ENCODE measurements at regions of chr17 and their contacts with region 1.

Region 1: DNA sequence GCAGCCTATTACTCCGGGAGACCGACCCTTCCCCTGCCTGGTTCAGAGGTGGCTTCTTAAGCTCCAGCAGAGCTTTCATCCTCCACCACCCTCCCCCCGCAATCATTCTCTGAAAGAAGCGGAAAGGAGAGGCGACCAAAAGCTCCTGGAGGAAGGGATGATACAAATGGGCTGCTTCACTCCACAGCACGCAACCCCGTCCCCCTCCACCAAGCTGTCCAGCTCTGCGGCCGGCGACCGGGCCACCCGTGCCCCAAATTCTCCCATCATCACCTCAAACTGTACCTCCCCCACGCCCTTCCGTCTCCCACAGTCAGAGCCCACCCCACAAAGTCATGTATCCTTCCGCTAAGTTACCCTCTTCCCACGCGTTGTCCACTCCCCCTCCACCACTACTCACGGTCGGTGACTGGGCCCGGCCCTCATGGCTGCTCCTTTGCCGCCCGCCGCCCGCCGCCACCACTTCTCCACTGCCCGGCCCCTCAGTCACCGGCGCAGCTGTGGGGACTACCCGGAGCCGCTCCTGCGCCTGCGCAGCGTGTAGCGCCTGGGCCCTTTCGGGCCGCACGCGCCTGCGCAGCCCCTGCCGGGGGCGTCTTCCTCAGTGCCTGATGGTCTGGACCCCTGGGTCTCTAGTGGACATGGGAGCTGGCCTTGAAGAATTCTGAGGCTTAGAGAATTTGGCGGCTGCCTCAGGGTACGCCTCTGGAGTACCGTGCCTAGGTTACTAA is at the start of gene FAM222B:
- DNase-seq: peak; percentile 78
- ATAC-seq: peak; percentile 98
- H3K4me3 ChIP-seq: peak within 1 kb of the TSS; percentile 87
- H3K27ac ChIP-seq: 0 out of 2 replicates have a peak within 1 kb of the TSS, but pooled peaks have one; percentile 20
- H3K4me1 ChIP-seq: no peaks in the 10 kb centered on the region
- H3K27me3 ChIP-seq: no peaks in the 10 kb centered on the region
- CTCF ChIP-seq: no peak
- total RNA-seq, gene FAM222B: 4.8 and 6.5 TPM in 2 replicates

Region 2: GRCh38 chr17:28710861-28711722 is 131.4 kb before region 1 on chr17:
- CTCF ChIA-PET with region 1: no interaction called
- POLR2A ChIA-PET with region 1: no interaction called
- intact Hi-C with region 1: no loop called
- DNase-seq: peak; percentile 87
- ATAC-seq: peak; percentile 96
- H3K4me3 ChIP-seq: peak overlapping the region; percentile 74
- H3K27ac ChIP-seq: peak overlapping the region; percentile 70
- H3K4me1 ChIP-seq: peaks cover 4% of the 10 kb centered on the region; the same call in 1 of the 2 replicates
- H3K27me3 ChIP-seq: no peaks in the 10 kb centered on the region
- CTCF ChIP-seq: no peak

Region 3: DNA sequence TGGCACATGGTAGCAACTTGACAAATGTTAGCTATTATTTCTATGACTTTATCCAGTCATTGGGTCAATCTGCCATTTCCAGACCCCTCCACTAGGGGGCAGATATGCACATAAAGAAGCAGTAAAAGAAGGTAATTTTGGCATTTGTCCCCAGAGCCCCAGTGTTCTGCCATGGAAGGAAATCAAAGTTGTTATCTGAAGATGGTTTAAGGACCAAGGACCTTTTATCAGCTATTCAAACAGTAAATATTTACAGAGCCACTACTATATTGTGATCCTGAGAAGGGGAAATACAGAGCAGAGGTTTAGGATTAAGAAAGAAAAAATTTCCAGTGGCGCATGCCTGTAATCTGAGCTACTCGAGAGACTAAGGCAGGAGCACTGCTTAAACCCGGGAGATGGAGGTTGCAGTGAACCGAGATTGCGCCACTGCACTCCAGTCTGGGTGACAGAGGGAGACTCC is 78.6 kb before region 1 on chr17:
- CTCF ChIA-PET with region 1: interaction called, 15 read pairs
- POLR2A ChIA-PET with region 1: no interaction called
- intact Hi-C with region 1: no loop called
- DNase-seq: peak; percentile 85
- ATAC-seq: no peak; the same call in 1 of the 2 replicates
- H3K4me3 ChIP-seq: no peak overlapping the region
- H3K27ac ChIP-seq: no peak overlapping the region
- H3K4me1 ChIP-seq: peaks cover 14% of the 10 kb centered on the region
- H3K27me3 ChIP-seq: no peaks in the 10 kb centered on the region
- CTCF ChIP-seq: peak; percentile 86

Region 4: GRCh38 chr17:28812748-28813377 is 29.6 kb before region 1 on chr17:
- CTCF ChIA-PET with region 1: no interaction called
- POLR2A ChIA-PET with region 1: no interaction called
- intact Hi-C with region 1: loop called (anchors 5 kb)
- DNase-seq: no peak
- ATAC-seq: peak; percentile 9
- H3K4me3 ChIP-seq: peak overlapping the region; percentile 79
- H3K27ac ChIP-seq: peak overlapping the region; percentile 86
- H3K4me1 ChIP-seq: peaks cover 34% of the 10 kb centered on the region
- H3K27me3 ChIP-seq: no peaks in the 10 kb centered on the region
- CTCF ChIP-seq: no peak

Region 5: DNA sequence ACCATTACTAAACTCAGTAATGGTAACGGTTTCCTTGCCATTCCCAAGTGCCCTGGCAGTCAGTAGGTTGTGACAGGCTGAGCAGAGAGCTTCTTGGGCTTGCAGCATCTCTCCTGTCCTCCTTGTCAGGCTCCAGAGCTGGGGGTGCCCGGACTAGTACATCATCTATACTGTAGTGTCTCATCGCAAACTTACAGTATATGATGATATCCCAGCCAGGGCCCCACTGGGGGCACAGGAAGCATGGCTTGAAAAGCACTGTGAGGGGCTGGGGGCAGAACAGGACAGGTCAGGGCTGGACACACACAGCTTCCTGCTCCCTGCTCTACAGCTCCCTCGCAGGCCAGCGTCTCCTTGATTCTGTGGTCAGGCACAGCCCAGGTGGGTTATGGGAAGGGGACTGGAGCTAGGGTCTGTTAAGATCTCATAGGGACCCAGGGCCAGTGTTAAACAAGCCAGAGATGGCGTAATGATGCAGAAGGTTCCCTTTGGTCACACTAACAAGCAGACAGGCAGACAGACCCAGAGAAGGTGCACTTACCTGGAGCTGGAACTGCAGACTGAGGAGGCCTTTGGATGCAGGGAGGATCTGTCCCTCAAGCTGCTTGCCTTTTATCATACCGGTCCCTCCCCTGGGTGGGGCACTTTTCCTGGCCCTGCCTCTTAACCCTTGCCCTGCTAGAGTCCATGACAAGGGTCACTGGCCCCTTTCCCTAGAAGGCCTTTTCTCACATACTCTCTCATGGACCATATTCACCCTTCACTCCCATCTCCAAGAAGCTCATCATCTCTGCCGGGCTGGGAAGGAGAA is 19.2 kb after region 1 on chr17:
- CTCF ChIA-PET with region 1: no interaction called
- POLR2A ChIA-PET with region 1: interaction called, 11 read pairs
- intact Hi-C with region 1: no loop called
- DNase-seq: no peak
- ATAC-seq: no peak
- H3K4me3 ChIP-seq: no peak overlapping the region
- H3K27ac ChIP-seq: no peak overlapping the region
- H3K4me1 ChIP-seq: peaks cover 1% of the 10 kb centered on the region; the same call in 1 of the 2 replicates
- H3K27me3 ChIP-seq: no peaks in the 10 kb centered on the region
- CTCF ChIP-seq: no peak

Region 6: GRCh38 chr17:28902819-28903545 is 60.5 kb after region 1 on chr17 and contains the start of gene DHRS13:
- CTCF ChIA-PET with region 1: no interaction called
- POLR2A ChIA-PET with region 1: interaction called, 6 read pairs
- intact Hi-C with region 1: loop called (anchors 10 kb)
- DNase-seq: peak; percentile 92
- ATAC-seq: peak; percentile 91
- H3K4me3 ChIP-seq: peak within 1 kb of the TSS; percentile 78
- H3K27ac ChIP-seq: no peak within 1 kb of the TSS
- H3K4me1 ChIP-seq: peaks cover 11% of the 10 kb centered on the region
- H3K27me3 ChIP-seq: no peaks in the 10 kb centered on the region
- CTCF ChIP-seq: peak; percentile 88
- total RNA-seq, gene DHRS13: 4.9 and 5.1 TPM in 2 replicates